Mammary epithelial cell (primary cell): ENCODE measurements at regions of chr6 and their contacts with region 1.

Region 1: DNA sequence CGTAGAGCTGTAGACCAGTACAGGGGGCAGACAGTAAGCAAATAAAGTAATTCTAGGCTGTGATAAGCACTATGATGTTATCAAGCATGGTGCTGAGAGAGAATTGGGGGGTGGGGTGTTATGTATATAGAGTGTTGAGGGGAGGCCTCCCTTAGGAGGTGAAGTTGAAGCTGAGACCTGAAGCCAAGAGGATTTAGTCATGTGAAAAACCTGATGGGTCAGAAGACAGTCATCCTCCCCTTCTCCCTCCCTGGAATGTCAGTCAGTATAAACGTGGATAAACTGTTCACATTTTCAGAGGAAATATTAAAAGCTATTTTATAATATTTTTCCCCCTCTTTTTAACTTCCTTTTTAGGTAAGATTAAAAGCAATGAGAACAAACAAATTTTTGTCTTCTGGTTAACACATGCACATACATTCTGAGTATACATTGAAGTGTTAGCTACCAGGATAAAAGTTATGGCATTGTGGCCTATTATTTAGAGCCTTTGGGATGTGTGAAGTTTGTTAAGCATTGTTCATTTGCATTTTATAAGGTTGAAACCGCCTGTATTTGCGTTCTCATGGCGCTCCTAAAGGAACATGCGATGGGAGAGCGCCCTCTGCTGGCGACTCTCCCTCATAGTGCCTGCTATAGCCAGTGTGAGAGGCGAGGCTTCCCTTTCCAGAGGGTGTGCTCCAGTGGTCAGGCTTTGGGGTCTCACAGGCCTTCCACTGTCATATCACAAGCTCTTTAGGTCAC is 35.4 kb upstream of the MAPK13 start:
- DNase-seq: peak; percentile 51
- H3K4me3 ChIP-seq: no peak overlapping the region
- H3K27ac ChIP-seq: no peak overlapping the region
- H3K4me1 ChIP-seq: peaks cover 2% of the 10 kb centered on the region
- H3K27me3 ChIP-seq: no peaks in the 10 kb centered on the region
- CTCF ChIP-seq: peak; percentile 93 to 96

Region 2: DNA sequence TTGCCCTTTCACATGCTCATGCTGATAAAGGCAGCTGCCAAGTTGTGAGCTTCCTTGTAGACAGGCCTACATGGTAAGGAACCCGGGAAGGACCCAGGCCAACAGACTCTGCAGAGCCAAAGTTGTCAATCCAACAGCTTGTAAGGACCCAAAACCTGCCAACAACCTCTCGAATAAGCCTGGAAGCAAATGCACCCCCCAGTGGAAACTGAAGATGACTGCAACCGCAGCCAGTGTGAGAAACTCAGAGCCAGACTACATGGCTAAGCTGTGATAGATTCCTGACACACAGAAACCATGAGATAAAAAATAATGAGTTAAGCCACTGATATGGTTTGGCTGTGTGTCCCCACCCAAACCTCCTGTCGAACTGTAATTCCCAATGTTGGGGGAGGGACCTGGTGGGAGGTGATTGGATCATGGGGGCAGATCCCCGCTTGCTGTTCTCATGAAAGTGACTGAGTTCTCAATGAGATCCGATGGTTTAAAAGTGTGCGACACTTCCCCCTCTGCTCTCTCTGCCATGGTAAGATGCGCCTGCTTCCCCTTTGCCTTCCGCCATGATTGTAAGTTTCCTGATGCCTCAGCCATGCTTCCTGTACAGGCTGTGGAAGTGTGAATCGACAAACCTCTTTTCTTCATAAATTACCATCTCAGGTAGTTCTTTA is 337.3 kb before region 1 on chr6:
- CTCF ChIA-PET with region 1: no interaction called
- dilution Hi-C with region 1: no loop called
- in situ Hi-C with region 1: no loop called
- intact Hi-C with region 1: loop called (anchors 5 kb)
- DNase-seq: no peak
- H3K4me3 ChIP-seq: no peak overlapping the region
- H3K27ac ChIP-seq: no peak overlapping the region
- H3K4me1 ChIP-seq: no peaks in the 10 kb centered on the region
- H3K27me3 ChIP-seq: no peaks in the 10 kb centered on the region
- CTCF ChIP-seq: peak; percentile 35 to 48

Region 3: GRCh38 chr6:35919827-35920751 is 174.8 kb before region 1 on chr6:
- CTCF ChIA-PET with region 1: no interaction called
- dilution Hi-C with region 1: no loop called
- in situ Hi-C with region 1: no loop called
- intact Hi-C with region 1: loop called (anchors 1 kb)
- DNase-seq: peak; percentile 85
- H3K4me3 ChIP-seq: peak overlapping the region; percentile 46 to 89 (median 63)
- H3K27ac ChIP-seq: peak overlapping the region; percentile 79
- H3K4me1 ChIP-seq: peaks cover 7% of the 10 kb centered on the region
- H3K27me3 ChIP-seq: no peaks in the 10 kb centered on the region
- CTCF ChIP-seq: no peak

Region 4: GRCh38 chr6:36027501-36028087 is 67.3 kb before region 1 on chr6 and contains the start of gene MAPK14:
- CTCF ChIA-PET with region 1: interaction called, 11 read pairs
- dilution Hi-C with region 1: no loop called
- in situ Hi-C with region 1: loop called (anchors 5 to 10 kb)
- intact Hi-C with region 1: loop called (anchors 1 kb)
- DNase-seq: peak; percentile 99
- H3K4me3 ChIP-seq: peak within 1 kb of the TSS; percentile 65 to 100 (median 98)
- H3K27ac ChIP-seq: peak within 1 kb of the TSS; percentile 91
- H3K4me1 ChIP-seq: peaks cover 5% of the 10 kb centered on the region
- H3K27me3 ChIP-seq: no peaks in the 10 kb centered on the region
- CTCF ChIP-seq: peak; percentile 74 to 96
- total RNA-seq, gene MAPK14: 44.4 to 66.8 TPM

Region 5: GRCh38 chr6:36042618-36043260 is 52.2 kb before region 1 on chr6:
- CTCF ChIA-PET with region 1: no interaction called
- dilution Hi-C with region 1: loop called (anchors 5 kb)
- in situ Hi-C with region 1: no loop called
- intact Hi-C with region 1: no loop called
- DNase-seq: no peak
- H3K4me3 ChIP-seq: no peak overlapping the region
- H3K27ac ChIP-seq: no peak overlapping the region
- H3K4me1 ChIP-seq: peaks cover 17% of the 10 kb centered on the region
- H3K27me3 ChIP-seq: no peaks in the 10 kb centered on the region
- CTCF ChIP-seq: no peak

Region 6: DNA sequence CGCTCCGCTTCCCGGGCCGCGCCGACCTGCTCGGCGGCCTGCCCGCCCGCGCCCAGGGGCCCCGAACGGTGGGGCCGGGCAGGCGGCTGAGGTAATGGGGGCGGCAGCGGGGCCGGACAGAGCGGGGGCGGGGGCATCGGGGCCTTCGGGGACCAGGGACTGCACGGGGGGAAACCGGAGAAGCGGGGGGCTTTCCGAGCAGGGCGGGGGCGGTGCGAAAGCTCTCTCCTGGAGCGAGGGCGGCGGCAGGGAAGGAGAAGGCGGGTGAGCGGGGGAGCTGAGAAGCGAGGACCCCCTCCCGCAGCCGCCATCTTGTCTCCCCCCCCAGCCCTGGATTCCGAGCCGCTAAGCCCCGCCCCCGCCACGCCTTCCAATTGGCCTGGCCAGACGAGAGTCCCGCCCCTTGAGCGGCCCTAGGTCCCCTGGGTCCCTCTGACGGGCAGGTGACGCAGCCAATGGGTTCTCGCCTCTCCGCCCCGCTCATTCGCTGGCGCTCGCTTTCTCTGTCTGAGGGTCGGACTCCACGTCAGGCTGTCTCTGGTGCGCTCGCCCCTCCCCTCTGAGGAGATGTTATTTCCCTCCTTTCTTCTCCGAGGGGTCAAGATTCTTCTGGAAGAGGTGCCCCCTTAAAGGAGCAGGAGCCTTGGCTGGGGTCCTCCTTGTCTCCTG is 102.1 kb after region 1 on chr6:
- CTCF ChIA-PET with region 1: no interaction called
- dilution Hi-C with region 1: no loop called
- in situ Hi-C with region 1: no loop called
- intact Hi-C with region 1: loop called (anchors 1 kb)
- DNase-seq: peak; percentile 92
- H3K4me3 ChIP-seq: peak overlapping the region; percentile 57 to 84 (median 59)
- H3K27ac ChIP-seq: no peak overlapping the region
- H3K4me1 ChIP-seq: peaks cover 8% of the 10 kb centered on the region
- H3K27me3 ChIP-seq: no peaks in the 10 kb centered on the region
- CTCF ChIP-seq: no peak